Activated CD4-positive, alpha-beta memory T cell treated with anti-CD3 and anti-CD28 coated beads for 36 hours (primary cell): ENCODE measurements at regions of chr2 and their contacts with region 1.

Region 1: GRCh38 chr2:69565431-69565839 is 78.1 kb downstream of the AAK1 start:
- DNase-seq: peak; percentile 81
- H3K4me3 Mint-ChIP-seq: no peak overlapping the region
- H3K27ac Mint-ChIP-seq: no peak overlapping the region
- H3K4me1 Mint-ChIP-seq: peaks cover 88% of the 10 kb centered on the region
- H3K27me3 Mint-ChIP-seq: no peaks in the 10 kb centered on the region

Region 2: GRCh38 chr2:69381337-69381737 is 184.1 kb before region 1 on chr2:
- CTCF ChIA-PET with region 1: interaction called, 16 read pairs
- POLR2A ChIA-PET with region 1: no interaction called
- intact Hi-C with region 1: loop called (anchors 5 kb)
- DNase-seq: peak; percentile 59
- H3K4me3 Mint-ChIP-seq: no peak overlapping the region
- H3K27ac Mint-ChIP-seq: peak overlapping the region; percentile 19
- H3K4me1 Mint-ChIP-seq: peaks cover 47% of the 10 kb centered on the region
- H3K27me3 Mint-ChIP-seq: no peaks in the 10 kb centered on the region

Region 3: DNA sequence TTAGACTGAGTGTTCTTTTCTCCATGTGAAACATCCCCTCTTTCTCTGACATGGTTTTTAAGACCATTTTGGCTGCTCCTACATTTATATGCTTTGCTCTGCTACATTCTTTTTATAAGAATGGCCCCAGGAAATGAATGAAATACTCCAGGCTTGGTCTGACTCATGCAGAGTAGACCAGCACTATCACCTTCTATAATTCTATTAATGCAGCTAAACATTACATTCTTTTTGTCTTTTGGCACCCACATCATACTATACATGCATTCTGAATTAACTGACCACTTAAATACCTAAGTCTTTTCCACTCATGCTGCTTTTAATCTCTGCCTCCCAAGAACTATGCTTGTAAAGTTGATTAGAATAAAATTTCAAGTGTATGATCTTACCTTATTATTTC is 16.0 kb before region 1 on chr2:
- CTCF ChIA-PET with region 1: interaction called, 37 read pairs
- POLR2A ChIA-PET with region 1: interaction called, 4 read pairs
- intact Hi-C with region 1: no loop called
- DNase-seq: no peak
- H3K4me3 Mint-ChIP-seq: no peak overlapping the region
- H3K27ac Mint-ChIP-seq: no peak overlapping the region
- H3K4me1 Mint-ChIP-seq: peaks cover 50% of the 10 kb centered on the region
- H3K27me3 Mint-ChIP-seq: no peaks in the 10 kb centered on the region

Region 4: DNA sequence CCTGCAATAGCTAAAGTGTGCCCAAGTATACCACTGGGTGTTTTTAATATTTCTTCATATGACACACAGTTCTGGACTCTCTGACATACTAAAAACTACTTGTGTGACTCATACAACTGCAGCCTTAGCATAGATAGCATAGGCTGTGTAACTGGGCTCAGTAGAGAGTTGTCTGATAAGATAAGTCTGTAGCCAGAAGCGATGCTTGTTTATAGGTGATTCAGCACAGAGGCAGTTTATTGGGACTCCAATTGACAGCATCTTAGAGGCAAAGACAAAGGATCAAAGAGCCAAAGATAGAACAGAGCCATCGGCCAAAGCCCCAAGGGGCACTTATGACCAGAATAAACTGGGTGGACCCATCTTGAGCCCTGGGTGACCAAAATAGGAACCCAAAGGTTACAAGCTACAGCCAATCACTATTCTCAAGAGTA is 35.8 kb after region 1 on chr2:
- CTCF ChIA-PET with region 1: interaction called, 15 read pairs
- POLR2A ChIA-PET with region 1: interaction called, 3 read pairs
- intact Hi-C with region 1: no loop called
- DNase-seq: no peak
- H3K4me3 Mint-ChIP-seq: no peak overlapping the region
- H3K27ac Mint-ChIP-seq: peak overlapping the region; percentile 85
- H3K4me1 Mint-ChIP-seq: peaks cover 88% of the 10 kb centered on the region
- H3K27me3 Mint-ChIP-seq: no peaks in the 10 kb centered on the region

Region 5: GRCh38 chr2:69636395-69636794 is 71.0 kb after region 1 on chr2:
- CTCF ChIA-PET with region 1: interaction called, 31 read pairs
- POLR2A ChIA-PET with region 1: interaction called, 3 read pairs
- intact Hi-C with region 1: no loop called
- DNase-seq: no peak
- H3K4me3 Mint-ChIP-seq: no peak overlapping the region
- H3K27ac Mint-ChIP-seq: no peak overlapping the region
- H3K4me1 Mint-ChIP-seq: peaks cover 70% of the 10 kb centered on the region
- H3K27me3 Mint-ChIP-seq: no peaks in the 10 kb centered on the region

Region 6: DNA sequence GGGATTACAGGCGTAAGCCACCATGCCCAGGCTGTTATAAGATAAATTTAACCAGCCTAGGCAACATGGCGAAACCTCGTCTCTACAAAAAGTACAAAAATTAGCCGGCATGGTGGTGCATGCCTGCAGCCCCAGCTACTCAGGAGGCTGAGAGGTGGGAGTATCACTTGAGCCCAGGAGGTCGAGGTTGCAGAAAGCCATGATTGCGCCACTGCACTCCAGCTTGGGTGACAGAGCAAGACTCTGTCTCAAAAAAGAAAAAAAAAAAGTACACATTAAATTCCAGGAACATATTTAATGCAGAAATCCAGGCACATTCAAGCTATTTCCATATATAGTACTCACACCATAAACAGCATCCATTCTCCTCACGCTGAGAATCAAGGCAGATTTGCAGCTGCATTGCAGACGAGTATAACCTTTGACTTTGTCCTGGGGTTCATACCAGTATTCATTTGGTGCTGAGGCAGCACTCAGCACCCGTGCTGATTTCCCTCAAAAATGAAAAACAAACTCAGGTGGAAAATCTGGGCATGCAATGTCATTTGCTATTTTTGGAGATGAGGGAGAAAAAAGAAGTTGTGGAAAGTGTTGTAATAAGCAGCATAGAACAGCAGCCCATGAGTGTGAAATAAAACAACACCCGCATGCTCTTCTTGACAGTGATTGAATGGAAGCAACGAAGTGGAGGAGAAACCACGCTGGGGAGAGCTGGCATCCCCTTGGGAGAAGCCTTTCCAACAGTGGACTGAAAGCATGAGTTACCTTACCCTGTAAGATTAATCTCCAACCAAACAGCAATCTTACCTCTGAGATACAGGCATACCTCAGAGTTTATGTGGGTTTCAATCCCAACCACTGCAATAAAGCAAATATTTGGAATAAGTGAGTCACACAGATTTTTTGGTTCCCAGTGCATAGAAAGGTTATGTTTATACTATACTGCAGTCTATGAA is 129.7 kb after region 1 on chr2:
- CTCF ChIA-PET with region 1: interaction called, 21 read pairs
- POLR2A ChIA-PET with region 1: no interaction called
- intact Hi-C with region 1: no loop called
- DNase-seq: no peak
- H3K4me3 Mint-ChIP-seq: no peak overlapping the region
- H3K27ac Mint-ChIP-seq: peak overlapping the region; percentile 47
- H3K4me1 Mint-ChIP-seq: peaks cover 78% of the 10 kb centered on the region
- H3K27me3 Mint-ChIP-seq: no peaks in the 10 kb centered on the region

Region 7: DNA sequence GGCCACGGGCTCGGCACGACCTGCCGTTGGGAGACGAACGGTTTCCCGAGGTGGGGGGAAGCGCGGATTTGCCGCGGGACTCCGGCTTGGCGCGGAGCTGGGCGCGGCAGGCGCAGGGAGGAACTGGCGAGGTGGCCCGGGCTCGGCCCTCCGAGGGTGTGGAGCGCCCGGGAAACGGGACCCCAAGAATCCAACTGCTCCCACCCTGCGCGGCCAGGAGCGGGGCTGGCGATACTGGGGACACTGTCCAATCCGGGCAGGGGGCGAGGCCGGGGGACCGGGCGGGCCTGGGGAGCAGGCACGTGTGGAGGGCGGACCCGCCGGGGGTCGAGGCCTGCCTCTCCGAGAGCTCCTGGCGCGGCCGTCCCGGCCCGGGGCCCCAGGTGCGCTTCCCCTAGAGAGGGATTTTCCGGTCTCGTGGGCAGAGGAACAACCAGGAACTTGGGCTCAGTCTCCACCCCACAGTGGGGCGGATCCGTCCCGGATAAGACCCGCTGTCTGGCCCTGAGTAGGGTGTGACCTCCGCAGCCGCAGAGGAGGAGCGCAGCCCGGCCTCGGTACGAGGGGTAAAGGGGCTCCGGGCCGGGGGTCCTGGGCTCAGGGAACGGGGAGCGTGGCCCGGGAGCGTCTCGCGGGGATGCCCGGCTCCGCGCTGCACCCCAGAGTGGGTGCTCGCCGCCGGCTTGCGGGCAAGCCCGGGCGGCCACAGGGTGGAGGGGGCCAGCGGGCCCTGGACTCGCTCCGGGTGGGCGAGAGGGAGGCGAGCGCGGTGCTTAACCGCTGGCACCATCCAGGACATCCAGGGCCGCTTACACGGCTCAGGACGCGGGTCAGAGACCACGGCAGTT is 176.4 kb after region 1 on chr2 and contains the start of gene ANXA4:
- CTCF ChIA-PET with region 1: interaction called, 11 read pairs
- POLR2A ChIA-PET with region 1: no interaction called
- intact Hi-C with region 1: no loop called
- DNase-seq: peak; percentile 76
- H3K4me3 Mint-ChIP-seq: peak within 1 kb of the TSS; percentile 81
- H3K27ac Mint-ChIP-seq: peak within 1 kb of the TSS; percentile 82
- H3K4me1 Mint-ChIP-seq: peaks cover 11% of the 10 kb centered on the region
- H3K27me3 Mint-ChIP-seq: no peaks in the 10 kb centered on the region
- total RNA-seq, gene ANXA4: 41.3 to 43.2 TPM